ENCODE measurements at regions of chr16 and their contacts with region 1.

Region 1: GRCh38 chr16:65667011-65667578 is 545.2 kb upstream of the CDH11 start:
- DNase-seq: peak; percentile 24
- ATAC-seq: peak; percentile 35
- H3K4me3 ChIP-seq: no peak overlapping the region
- H3K27ac ChIP-seq: 0 out of 2 replicates have a peak overlapping the region, but pooled peaks have one; percentile 33
- H3K4me1 ChIP-seq: peaks cover 43% of the 10 kb centered on the region
- H3K27me3 ChIP-seq: no peaks in the 10 kb centered on the region
- CTCF ChIP-seq: peak; percentile 36; the same call in 1 of the 2 replicates

Region 2: GRCh38 chr16:66007717-66008116 is 340.6 kb after region 1 on chr16:
- CTCF ChIA-PET with region 1: no interaction called
- POLR2A ChIA-PET with region 1: no interaction called
- intact Hi-C with region 1: loop called (anchors 2 kb)
- DNase-seq: peak; percentile 71
- ATAC-seq: peak; percentile 66
- H3K4me3 ChIP-seq: 0 out of 2 replicates have a peak overlapping the region, but pooled peaks have one; percentile 17
- H3K27ac ChIP-seq: no peak overlapping the region; the same call in 1 of the 2 replicates
- H3K4me1 ChIP-seq: peaks cover 22% of the 10 kb centered on the region
- H3K27me3 ChIP-seq: no peaks in the 10 kb centered on the region
- CTCF ChIP-seq: no peak

Region 3: DNA sequence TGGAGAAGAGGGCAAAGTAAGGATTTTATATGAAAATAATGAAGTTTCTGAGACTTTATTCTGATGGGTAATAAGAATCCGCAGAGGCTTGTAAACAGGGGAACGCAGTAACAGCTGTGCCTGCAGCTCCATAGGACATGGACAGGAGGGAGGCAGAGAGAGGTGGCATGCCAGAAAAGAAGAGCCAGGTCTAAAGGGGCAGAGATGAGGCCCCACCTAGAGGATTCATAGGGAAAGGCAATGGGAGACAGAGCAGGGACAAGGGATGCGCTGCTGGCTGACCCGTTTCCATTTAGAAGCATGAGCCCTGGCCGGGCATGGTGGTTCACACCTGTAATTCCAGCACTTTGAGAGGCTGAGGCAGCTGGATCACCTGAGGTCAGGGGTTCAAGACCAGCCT is 359.1 kb after region 1 on chr16:
- CTCF ChIA-PET with region 1: no interaction called
- POLR2A ChIA-PET with region 1: no interaction called
- intact Hi-C with region 1: loop called (anchors 5 kb)
- DNase-seq: peak; percentile 50
- ATAC-seq: peak; percentile 98
- H3K4me3 ChIP-seq: no peak overlapping the region
- H3K27ac ChIP-seq: no peak overlapping the region
- H3K4me1 ChIP-seq: 0 out of 2 replicates have a peak, but pooled peaks cover 8% of the 10 kb centered on the region
- H3K27me3 ChIP-seq: no peaks in the 10 kb centered on the region
- CTCF ChIP-seq: peak; percentile 58

Measured in PC-3 (cell line).